Endothelial cell of umbilical vein (primary cell): ENCODE measurements at regions of chr17 and their contacts with region 1.

Region 1: DNA sequence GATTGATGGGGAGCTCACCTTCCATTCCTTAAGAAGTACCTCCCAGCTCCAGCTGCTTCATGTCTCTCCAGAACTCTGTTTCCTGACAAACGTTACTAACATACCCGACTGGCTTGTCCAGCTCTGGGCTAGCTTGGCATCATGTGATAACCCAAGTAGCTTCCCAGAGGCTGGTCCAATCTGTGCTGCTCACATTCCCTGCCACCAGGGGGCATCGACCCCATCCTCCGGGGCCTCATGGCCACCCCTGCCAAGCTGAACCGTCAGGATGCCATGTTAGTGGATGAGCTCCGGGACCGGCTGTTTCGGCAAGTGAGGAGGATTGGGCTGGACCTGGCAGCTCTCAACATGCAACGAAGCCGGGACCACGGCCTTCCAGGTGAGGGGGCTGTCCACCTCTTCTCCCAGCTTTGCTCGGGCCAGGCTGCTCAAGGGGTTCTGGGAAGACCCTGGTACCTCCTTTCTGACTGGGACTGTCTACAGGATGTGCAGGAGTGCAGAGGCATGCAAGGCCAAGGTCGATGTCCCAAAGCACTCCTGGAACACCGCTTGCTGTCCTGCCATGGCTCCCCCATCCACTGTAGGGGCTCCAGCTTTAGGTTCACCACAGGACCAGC is 7.6 kb downstream of the EPX start:
- DNase-seq: peak; percentile 43
- H3K4me3 ChIP-seq: no peak overlapping the region
- H3K27ac ChIP-seq: no peak overlapping the region
- H3K4me1 ChIP-seq: no peaks in the 10 kb centered on the region
- H3K27me3 ChIP-seq: peaks cover 0 to 3% of the 10 kb centered on the region in 2 experiments
- CTCF ChIP-seq: peak; percentile 65 to 75
- POLR2A ChIP-seq: no peak

Region 2: DNA sequence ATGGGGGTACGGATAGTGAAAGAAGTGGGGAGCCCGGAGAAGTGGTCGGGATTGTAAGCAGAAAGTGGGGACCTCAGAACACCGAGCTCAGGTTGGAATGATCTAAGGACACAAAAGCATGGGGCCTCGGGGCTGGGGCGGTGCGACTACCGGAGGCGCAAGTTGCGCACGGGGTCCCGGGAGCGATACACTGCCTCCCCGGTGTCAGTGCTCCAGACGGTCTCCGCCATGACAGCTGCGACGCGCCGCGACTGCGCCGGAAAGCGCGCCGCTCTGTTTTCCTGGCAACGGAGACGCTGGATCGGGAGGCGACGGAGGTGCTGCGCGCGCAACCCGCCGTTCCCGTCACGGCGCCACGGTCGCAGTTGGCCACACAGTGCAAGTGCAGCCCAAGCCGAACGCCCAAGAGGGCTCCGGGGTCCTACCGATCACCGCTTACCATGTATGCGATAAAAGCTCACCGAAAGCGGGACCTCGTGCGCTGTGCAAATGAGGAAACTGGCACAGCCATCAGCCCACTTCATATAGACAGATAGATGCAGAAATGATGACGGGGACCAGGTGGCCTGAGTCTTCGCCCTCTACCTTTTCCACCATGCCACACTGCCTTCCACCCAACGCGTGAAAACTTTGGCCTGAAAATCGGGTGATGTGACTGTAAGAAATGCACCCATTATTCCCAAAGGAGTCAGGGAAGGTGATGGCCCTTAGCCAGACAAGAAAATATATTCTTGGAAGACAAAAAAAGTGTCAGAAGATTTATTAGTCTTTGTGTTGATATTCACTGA is 19.1 kb after region 1 on chr17 and contains the start of gene MKS1:
- CTCF ChIA-PET with region 1: interaction called, 14 read pairs
- POLR2A ChIA-PET with region 1: no interaction called
- dilution Hi-C with region 1: no loop called
- intact Hi-C with region 1: no loop called
- DNase-seq: peak; percentile 94
- H3K4me3 ChIP-seq: peak within 1 kb of the TSS; percentile 35 to 74 (median 66)
- H3K27ac ChIP-seq: peak within 1 kb of the TSS; percentile 48
- H3K4me1 ChIP-seq: peaks cover 16% of the 10 kb centered on the region
- H3K27me3 ChIP-seq: no peaks in the 10 kb centered on the region
- CTCF ChIP-seq: peak; percentile 45 to 75
- POLR2A ChIP-seq: peak; percentile 87
- total RNA-seq, gene MKS1: 12.2 and 16.3 TPM in 2 replicates